ENCODE measurements at regions of chr2 and their contacts with region 1.

Region 1: GRCh38 chr2:21175895-21176646 is 52.3 kb downstream of the TDRD15 start:
- DNase-seq: no peak
- H3K4me3 ChIP-seq: no peak overlapping the region
- H3K27ac ChIP-seq: no peak overlapping the region
- H3K4me1 ChIP-seq: no peaks in the 10 kb centered on the region
- H3K27me3 ChIP-seq: no peaks in the 10 kb centered on the region
- CTCF ChIP-seq: peak; percentile 43; the same call in 1 of the 2 replicates

Region 2: DNA sequence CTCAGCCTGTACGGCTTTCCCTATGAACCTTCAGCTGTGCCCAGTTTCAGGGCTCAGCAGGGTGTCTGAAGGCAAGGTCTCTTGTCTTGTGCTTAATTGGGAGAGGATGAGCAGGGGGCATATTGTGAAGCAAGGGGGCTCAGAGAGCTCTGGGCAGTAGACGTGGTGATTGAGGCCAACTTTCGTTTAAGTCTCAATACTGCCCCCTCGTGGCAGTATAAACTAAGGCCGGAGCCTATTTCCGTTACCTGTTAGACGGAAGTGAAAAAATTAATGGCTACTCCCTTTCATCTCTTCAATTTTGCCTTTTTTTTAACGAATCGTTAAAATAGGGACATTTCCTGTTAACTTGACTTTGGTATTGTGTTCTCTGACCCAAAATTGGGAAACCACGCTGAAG is 141.1 kb after region 1 on chr2:
- CTCF ChIA-PET with region 1: no interaction called
- POLR2A ChIA-PET with region 1: no interaction called
- intact Hi-C with region 1: loop called (anchors 10 kb)
- DNase-seq: peak in 1 of 2 experiments; percentile 6
- H3K4me3 ChIP-seq: no peak overlapping the region
- H3K27ac ChIP-seq: no peak overlapping the region
- H3K4me1 ChIP-seq: no peaks in the 10 kb centered on the region
- H3K27me3 ChIP-seq: no peaks in the 10 kb centered on the region
- CTCF ChIP-seq: peak; percentile 77

Measured in PC-9 (cell line).